CD14-positive monocyte (primary cell): ENCODE measurements at regions of chr2 and their contacts with region 1.

Region 1: GRCh38 chr2:242088471-242089212 is 219.1 kb downstream of the RTP5 start:
- DNase-seq: peak; percentile 79 to 90 (median 88)
- H3K4me3 ChIP-seq: peak overlapping the region; percentile 60 to 83 (median 79)
- H3K4me3 Mint-ChIP-seq: peak overlapping the region; percentile 82 to 85
- H3K27ac ChIP-seq: peak overlapping the region in 1 of 2 donors; percentile 84
- H3K27ac Mint-ChIP-seq: peak overlapping the region; percentile 78 to 99 (median 85)
- H3K4me1 ChIP-seq: peaks cover 51 to 65% of the 10 kb centered on the region in 2 donors
- H3K4me1 Mint-ChIP-seq: peaks cover 63% of the 10 kb centered on the region
- H3K27me3 ChIP-seq: no peaks in the 10 kb centered on the region
- H3K27me3 Mint-ChIP-seq: no peaks in the 10 kb centered on the region
- CTCF ChIP-seq: no peak

Region 2: GRCh38 chr2:241629762-241630435 is 458.7 kb before region 1 on chr2:
- intact Hi-C with region 1: no loop called
- DNase-seq: no peak
- H3K4me3 ChIP-seq: no peak overlapping the region
- H3K4me3 Mint-ChIP-seq: no peak overlapping the region
- H3K27ac ChIP-seq: no peak overlapping the region
- H3K27ac Mint-ChIP-seq: peak overlapping the region in 4 of 7 donors; percentile 12 to 72 (median 30)
- H3K4me1 ChIP-seq: no peaks in the 10 kb centered on the region
- H3K4me1 Mint-ChIP-seq: peaks cover 4% of the 10 kb centered on the region
- H3K27me3 ChIP-seq: no peaks in the 10 kb centered on the region
- H3K27me3 Mint-ChIP-seq: peaks cover 0 to 2% (median 0%) of the 10 kb centered on the region in 3 donors
- CTCF ChIP-seq: no peak

Region 3: GRCh38 chr2:241950413-241951315 is 138.0 kb before region 1 on chr2:
- intact Hi-C with region 1: loop called in 1 of 2 experiments (anchors 5 kb)
- DNase-seq: peak; percentile 29 to 58 (median 44)
- H3K4me3 ChIP-seq: no peak overlapping the region
- H3K4me3 Mint-ChIP-seq: no peak overlapping the region
- H3K27ac ChIP-seq: no peak overlapping the region
- H3K27ac Mint-ChIP-seq: no peak overlapping the region
- H3K4me1 ChIP-seq: no peaks in the 10 kb centered on the region
- H3K4me1 Mint-ChIP-seq: peaks cover 3% of the 10 kb centered on the region
- H3K27me3 ChIP-seq: no peaks in the 10 kb centered on the region
- H3K27me3 Mint-ChIP-seq: peaks cover 0 to 6% (median 3%) of the 10 kb centered on the region in 3 donors
- CTCF ChIP-seq: peak; percentile 92

Region 4: DNA sequence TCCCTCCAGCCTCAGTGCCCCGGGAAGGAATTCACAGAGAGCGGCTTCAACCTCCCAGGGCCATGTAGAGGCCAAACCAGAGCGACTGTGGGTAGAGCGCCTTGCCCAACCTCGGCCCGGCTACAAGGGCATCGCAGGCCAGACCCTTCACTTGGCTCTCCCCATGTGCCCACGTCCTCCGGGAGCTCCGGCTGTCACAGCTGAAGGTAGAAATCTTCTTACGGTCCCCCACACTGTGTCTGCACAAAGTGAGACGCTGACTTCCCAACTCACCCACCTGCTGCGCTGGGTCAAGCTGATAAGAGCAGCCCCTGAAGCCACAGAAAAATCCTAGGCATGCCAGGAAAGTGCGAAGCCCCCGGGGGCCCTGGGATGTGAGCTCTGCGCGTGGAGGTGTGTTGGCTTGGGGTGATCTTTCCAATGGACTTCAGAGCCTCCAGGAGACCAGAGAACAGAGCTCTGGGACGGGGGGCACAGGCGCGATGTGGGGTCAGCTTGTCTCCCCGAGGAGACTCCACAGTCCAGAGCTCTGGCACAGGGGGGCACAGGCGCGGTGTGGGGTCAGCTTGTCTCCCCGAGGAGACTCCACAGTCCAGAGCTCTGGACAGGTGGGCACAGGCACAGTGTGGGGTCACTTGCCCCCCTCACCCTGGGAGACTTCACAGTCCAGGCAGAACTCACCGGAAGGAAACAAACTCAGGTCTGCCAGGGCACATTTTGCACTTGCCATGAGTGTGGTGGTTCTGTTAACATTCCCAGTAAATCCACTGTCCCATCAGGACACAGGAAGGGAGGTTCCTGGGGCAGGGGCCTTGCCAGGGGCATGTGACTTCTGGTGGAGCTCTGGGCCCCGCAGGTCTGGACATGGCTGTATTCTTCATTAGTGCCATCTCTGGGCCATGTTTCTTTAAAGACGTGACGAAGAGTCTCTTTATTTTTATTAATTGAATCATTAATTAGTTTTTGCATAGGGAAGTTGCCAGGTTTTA is 113.4 kb before region 1 on chr2:
- intact Hi-C with region 1: loop called in 1 of 2 experiments (anchors 5 kb)
- DNase-seq: no peak
- H3K4me3 ChIP-seq: no peak overlapping the region
- H3K4me3 Mint-ChIP-seq: no peak overlapping the region
- H3K27ac ChIP-seq: no peak overlapping the region
- H3K27ac Mint-ChIP-seq: peak overlapping the region in 1 of 7 donors; percentile 12
- H3K4me1 ChIP-seq: peaks cover 3 to 14% of the 10 kb centered on the region in 2 donors
- H3K4me1 Mint-ChIP-seq: peaks cover 15% of the 10 kb centered on the region
- H3K27me3 ChIP-seq: no peaks in the 10 kb centered on the region
- H3K27me3 Mint-ChIP-seq: peaks cover 0 to 2% (median 2%) of the 10 kb centered on the region in 3 donors
- CTCF ChIP-seq: no peak

Region 5: GRCh38 chr2:242052421-242052820 is 36.2 kb before region 1 on chr2:
- intact Hi-C with region 1: no loop called
- DNase-seq: no peak
- H3K4me3 ChIP-seq: no peak overlapping the region
- H3K4me3 Mint-ChIP-seq: no peak overlapping the region
- H3K27ac ChIP-seq: no peak overlapping the region
- H3K27ac Mint-ChIP-seq: no peak overlapping the region
- H3K4me1 ChIP-seq: no peaks in the 10 kb centered on the region
- H3K4me1 Mint-ChIP-seq: no peaks in the 10 kb centered on the region
- H3K27me3 ChIP-seq: peaks cover 6 to 13% of the 10 kb centered on the region in 2 donors
- H3K27me3 Mint-ChIP-seq: peaks cover 37 to 59% (median 46%) of the 10 kb centered on the region in 3 donors
- CTCF ChIP-seq: no peak

Region 6: GRCh38 chr2:242064364-242065250 is 24.0 kb before region 1 on chr2:
- intact Hi-C with region 1: no loop called
- DNase-seq: no peak
- H3K4me3 ChIP-seq: no peak overlapping the region
- H3K4me3 Mint-ChIP-seq: no peak overlapping the region
- H3K27ac ChIP-seq: no peak overlapping the region
- H3K27ac Mint-ChIP-seq: no peak overlapping the region
- H3K4me1 ChIP-seq: no peaks in the 10 kb centered on the region
- H3K4me1 Mint-ChIP-seq: no peaks in the 10 kb centered on the region
- H3K27me3 ChIP-seq: peaks cover 0 to 4% of the 10 kb centered on the region in 2 donors
- H3K27me3 Mint-ChIP-seq: peaks cover 15 to 36% (median 20%) of the 10 kb centered on the region in 3 donors
- CTCF ChIP-seq: no peak